Mammary epithelial cell (primary cell): ENCODE measurements at regions of chr1 and their contacts with region 1.

Region 1: DNA sequence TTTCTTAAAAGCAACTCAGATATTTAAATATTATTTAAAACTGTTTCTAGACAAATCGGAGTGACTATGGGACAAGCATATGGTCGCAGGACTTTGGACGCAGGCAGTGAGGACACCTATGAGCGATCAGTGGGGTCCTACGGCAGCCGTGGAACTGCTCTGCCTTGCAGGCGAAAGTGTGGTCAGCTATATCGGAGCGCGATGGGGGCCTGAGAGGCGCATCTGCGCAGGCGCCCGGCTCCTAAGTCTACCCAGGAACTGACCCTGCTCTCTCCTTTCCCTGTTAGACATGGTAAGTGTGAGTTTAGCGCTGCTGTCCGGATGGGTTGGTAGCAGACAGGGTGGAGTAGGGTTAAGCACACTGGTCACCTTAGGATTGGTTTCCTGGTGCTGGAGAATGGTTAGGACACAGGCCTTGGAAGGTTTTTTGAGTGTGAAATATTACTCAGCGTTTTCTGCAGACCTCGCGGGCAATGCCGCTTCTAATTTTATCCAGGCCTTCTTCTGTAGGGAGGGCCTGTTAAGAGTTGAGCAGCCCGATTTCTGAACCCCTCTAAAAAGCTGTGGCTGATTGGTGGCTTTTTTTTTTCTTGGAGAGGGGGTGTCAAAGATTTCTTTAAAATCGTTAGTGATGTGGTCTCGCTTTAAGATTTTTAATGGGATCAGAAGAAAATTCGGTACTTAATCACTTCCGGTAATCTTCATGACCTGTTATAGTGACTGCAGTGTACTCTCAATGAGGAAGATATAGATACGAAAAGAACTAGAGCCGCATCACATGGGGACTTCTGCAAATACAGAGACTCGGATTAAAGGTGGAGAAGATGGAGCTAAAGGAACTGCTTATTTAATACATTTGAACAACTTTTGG is at the start of gene RABGGTB:
- DNase-seq: peak; percentile 91
- H3K4me3 ChIP-seq: peak within 1 kb of the TSS; percentile 63 to 99 (median 95)
- H3K27ac ChIP-seq: peak within 1 kb of the TSS; percentile 73
- H3K4me1 ChIP-seq: peaks cover 14% of the 10 kb centered on the region
- H3K27me3 ChIP-seq: no peaks in the 10 kb centered on the region
- CTCF ChIP-seq: no peak
- total RNA-seq, gene RABGGTB: 77.7 to 107 TPM

Region 2: DNA sequence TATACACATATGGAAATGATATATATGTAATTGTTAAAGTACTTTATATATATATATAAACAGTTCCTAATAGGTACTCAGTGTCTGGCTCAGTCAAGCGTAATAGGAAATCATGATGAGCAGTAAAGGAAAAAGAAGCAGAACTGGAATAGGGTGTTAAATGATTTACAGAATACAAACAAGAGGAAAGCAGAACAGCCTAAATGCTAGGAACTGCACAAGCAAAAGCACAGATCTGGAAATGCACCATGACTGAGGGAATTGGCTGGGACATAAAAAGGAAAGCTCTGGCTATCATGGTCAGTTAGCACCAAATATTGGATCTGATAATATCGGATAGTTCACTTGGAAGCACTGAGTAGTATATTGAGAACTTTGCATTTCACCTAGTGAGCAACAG is 227.1 kb before region 1 on chr1:
- CTCF ChIA-PET with region 1: no interaction called
- dilution Hi-C with region 1: no loop called
- in situ Hi-C with region 1: no loop called
- intact Hi-C with region 1: no loop called
- DNase-seq: no peak
- H3K4me3 ChIP-seq: no peak overlapping the region
- H3K27ac ChIP-seq: no peak overlapping the region
- H3K4me1 ChIP-seq: no peaks in the 10 kb centered on the region
- H3K27me3 ChIP-seq: no peaks in the 10 kb centered on the region
- CTCF ChIP-seq: no peak

Region 3: GRCh38 chr1:75632350-75632949 is 153.8 kb before region 1 on chr1:
- CTCF ChIA-PET with region 1: no interaction called
- dilution Hi-C with region 1: no loop called
- in situ Hi-C with region 1: no loop called
- intact Hi-C with region 1: loop called (anchors 10 kb)
- DNase-seq: peak; percentile 11
- H3K4me3 ChIP-seq: no peak overlapping the region
- H3K27ac ChIP-seq: no peak overlapping the region
- H3K4me1 ChIP-seq: no peaks in the 10 kb centered on the region
- H3K27me3 ChIP-seq: peaks cover 4% of the 10 kb centered on the region
- CTCF ChIP-seq: peak; percentile 79 to 83

Region 4: DNA sequence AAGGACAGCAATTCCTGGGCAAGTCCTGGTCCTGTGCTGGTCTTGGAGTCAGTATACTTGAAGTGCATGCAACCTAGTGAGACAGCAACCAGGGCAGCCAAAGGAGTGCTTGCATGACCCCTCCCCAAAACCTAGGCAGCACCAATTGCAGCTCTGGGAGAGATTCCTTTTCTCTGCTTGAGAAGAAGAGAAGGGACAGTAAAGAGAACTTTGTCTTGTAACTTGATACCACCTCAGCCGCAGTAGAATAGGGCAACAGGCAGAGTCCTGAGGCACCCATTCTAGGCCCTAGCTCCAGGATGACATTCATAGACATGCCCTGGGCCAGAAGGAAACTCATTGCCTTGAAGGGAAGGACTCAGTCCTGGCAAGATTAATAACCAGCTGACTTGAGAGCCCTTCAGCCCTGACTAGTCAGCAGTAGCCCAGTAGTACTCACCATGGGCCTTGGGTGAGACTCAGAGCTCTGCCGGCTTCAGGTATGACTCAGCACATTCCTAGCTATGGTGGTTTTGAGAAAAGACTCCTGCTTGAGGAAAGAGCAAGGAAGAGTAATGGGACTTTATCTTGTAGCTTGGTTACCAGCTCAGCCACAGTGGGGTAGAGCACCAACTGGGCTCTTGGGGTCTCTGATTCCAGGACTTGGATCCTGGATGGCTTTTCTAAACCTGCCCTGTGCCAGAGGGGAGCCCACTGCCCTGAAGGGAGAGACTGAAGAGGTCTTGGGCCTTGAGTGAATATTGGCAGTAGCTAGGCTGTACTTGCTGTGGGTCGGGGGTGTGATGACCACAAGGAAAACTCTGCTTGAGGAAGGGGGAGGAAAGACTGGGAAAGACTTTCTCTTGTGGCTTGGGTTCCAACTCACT is 113.5 kb before region 1 on chr1:
- CTCF ChIA-PET with region 1: no interaction called
- dilution Hi-C with region 1: no loop called
- in situ Hi-C with region 1: no loop called
- intact Hi-C with region 1: loop called (anchors 2 kb)
- DNase-seq: peak; percentile 90
- H3K4me3 ChIP-seq: no peak overlapping the region
- H3K27ac ChIP-seq: peak overlapping the region; percentile 23
- H3K4me1 ChIP-seq: peaks cover 13% of the 10 kb centered on the region
- H3K27me3 ChIP-seq: no peaks in the 10 kb centered on the region
- CTCF ChIP-seq: no peak

Region 5: GRCh38 chr1:75724472-75725022 is 61.7 kb before region 1 on chr1 and contains the start of gene ACADM:
- CTCF ChIA-PET with region 1: no interaction called
- dilution Hi-C with region 1: no loop called
- in situ Hi-C with region 1: loop called in 1 of 2 experiments (anchors 10 kb)
- intact Hi-C with region 1: loop called (anchors 1 kb)
- DNase-seq: peak; percentile 81
- H3K4me3 ChIP-seq: peak within 1 kb of the TSS; percentile 87 to 97 (median 90)
- H3K27ac ChIP-seq: peak within 1 kb of the TSS; percentile 67
- H3K4me1 ChIP-seq: no peaks in the 10 kb centered on the region
- H3K27me3 ChIP-seq: no peaks in the 10 kb centered on the region
- CTCF ChIP-seq: no peak
- total RNA-seq, gene ACADM: 24.2 to 24.4 TPM

Region 6: GRCh38 chr1:75771978-75772377 is 14.2 kb before region 1 on chr1:
- CTCF ChIA-PET with region 1: no interaction called
- dilution Hi-C with region 1: no loop called
- in situ Hi-C with region 1: no loop called
- intact Hi-C with region 1: loop called (anchors 2 kb)
- DNase-seq: no peak
- H3K4me3 ChIP-seq: no peak overlapping the region
- H3K27ac ChIP-seq: no peak overlapping the region
- H3K4me1 ChIP-seq: peaks cover 7% of the 10 kb centered on the region
- H3K27me3 ChIP-seq: no peaks in the 10 kb centered on the region
- CTCF ChIP-seq: no peak